Dendritic cell treated with granulocyte-macrophage colony-stimulating factor and Interleukin-4, amounts not matched to agents 40 ng/mL and 50 ng/mL, for 4 days (primary cell): ENCODE measurements at regions of chr5 and their contacts with region 1.

Region 1: GRCh38 chr5:78509884-78510769 is 138.4 kb downstream of the LHFPL2 start:
- H3K4me3 Mint-ChIP-seq: peak overlapping the region; percentile 79
- H3K27ac Mint-ChIP-seq: peak overlapping the region; percentile 92
- H3K4me1 Mint-ChIP-seq: peaks cover 78% of the 10 kb centered on the region
- H3K27me3 Mint-ChIP-seq: no peaks in the 10 kb centered on the region

Region 2: GRCh38 chr5:77852514-77853352 is 657.4 kb before region 1 on chr5:
- intact Hi-C with region 1: no loop called
- H3K4me3 Mint-ChIP-seq: peak overlapping the region; percentile 71
- H3K27ac Mint-ChIP-seq: no peak overlapping the region
- H3K4me1 Mint-ChIP-seq: peaks cover 18% of the 10 kb centered on the region
- H3K27me3 Mint-ChIP-seq: peaks cover 30% of the 10 kb centered on the region

Region 3: DNA sequence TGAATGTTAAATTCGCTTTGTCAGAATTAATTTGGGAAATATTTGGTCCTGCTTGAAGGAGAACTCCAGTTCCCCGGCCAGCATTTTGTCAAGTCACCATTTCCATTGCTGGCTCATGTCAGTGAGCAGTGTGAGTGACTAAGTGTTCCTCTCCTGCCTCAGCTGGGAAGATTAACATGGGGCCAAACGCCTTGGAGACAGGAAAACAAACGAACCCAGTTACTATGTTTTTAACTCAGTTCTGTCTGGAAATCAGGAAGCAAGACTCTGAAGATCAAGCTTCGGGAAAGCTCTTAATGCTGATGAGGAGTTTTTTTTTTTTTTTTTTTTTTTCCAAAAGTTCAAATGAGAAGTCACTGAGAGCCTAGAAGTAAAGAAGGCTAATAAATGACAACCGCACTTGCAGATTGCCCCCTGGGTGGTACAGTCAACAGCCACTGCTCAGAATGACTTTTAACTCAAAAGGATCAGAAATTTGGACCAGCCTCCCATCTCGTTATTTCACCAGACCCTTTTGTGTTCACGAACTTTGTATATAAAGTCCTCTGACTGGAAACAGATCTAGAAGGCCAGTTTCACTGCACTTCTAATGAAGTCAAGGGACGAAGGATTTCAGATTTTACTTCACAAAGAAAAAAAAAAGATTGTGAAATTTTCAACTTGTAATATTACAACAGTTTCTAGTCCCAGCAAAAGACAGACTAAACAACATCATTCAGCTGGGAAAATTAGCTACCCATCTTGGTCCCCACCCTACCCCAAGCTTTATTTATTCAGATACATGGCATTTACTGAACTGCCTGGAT is 17.1 kb after region 1 on chr5:
- intact Hi-C with region 1: loop called (anchors 2 kb)
- H3K4me3 Mint-ChIP-seq: peak overlapping the region; percentile 6
- H3K27ac Mint-ChIP-seq: peak overlapping the region; percentile 92
- H3K4me1 Mint-ChIP-seq: peaks cover 68% of the 10 kb centered on the region
- H3K27me3 Mint-ChIP-seq: no peaks in the 10 kb centered on the region

Region 4: GRCh38 chr5:78649211-78649695 is 139.1 kb after region 1 on chr5:
- intact Hi-C with region 1: no loop called
- H3K4me3 Mint-ChIP-seq: peak overlapping the region; percentile 87
- H3K27ac Mint-ChIP-seq: no peak overlapping the region
- H3K4me1 Mint-ChIP-seq: peaks cover 34% of the 10 kb centered on the region
- H3K27me3 Mint-ChIP-seq: peaks cover 26% of the 10 kb centered on the region